ENCODE measurements at regions of chr17 and their contacts with region 1.

Region 1: DNA sequence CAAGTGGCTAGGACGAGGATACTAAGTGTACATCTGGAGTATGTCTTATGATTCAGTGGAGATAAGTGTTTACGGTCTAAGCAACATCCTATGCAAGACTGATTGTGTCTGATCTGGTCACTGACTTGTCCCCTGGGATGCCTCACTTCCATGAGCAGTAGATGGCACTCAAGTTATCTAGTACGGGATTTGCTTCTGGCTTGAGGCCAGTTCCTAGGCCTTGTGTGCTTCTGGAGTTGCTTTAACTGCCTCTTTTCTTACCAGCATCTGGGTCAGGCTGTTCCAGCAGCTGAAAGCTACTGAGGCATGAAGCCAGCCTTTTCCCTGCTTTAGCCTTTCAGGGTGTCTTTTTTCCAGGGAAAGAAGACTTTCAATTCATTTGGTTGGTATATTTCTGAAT is 23.0 kb downstream of the SUPT6H start:
- DNase-seq: no peak
- H3K4me3 ChIP-seq: no peak overlapping the region
- H3K27ac ChIP-seq: no peak overlapping the region
- H3K4me1 ChIP-seq: no peaks in the 10 kb centered on the region
- H3K27me3 ChIP-seq: no peaks in the 10 kb centered on the region
- CTCF ChIP-seq: no peak
- EP300 ChIP-seq: no peak
- POLR2A ChIP-seq: no peak
- RAD21 ChIP-seq: no peak

Region 2: DNA sequence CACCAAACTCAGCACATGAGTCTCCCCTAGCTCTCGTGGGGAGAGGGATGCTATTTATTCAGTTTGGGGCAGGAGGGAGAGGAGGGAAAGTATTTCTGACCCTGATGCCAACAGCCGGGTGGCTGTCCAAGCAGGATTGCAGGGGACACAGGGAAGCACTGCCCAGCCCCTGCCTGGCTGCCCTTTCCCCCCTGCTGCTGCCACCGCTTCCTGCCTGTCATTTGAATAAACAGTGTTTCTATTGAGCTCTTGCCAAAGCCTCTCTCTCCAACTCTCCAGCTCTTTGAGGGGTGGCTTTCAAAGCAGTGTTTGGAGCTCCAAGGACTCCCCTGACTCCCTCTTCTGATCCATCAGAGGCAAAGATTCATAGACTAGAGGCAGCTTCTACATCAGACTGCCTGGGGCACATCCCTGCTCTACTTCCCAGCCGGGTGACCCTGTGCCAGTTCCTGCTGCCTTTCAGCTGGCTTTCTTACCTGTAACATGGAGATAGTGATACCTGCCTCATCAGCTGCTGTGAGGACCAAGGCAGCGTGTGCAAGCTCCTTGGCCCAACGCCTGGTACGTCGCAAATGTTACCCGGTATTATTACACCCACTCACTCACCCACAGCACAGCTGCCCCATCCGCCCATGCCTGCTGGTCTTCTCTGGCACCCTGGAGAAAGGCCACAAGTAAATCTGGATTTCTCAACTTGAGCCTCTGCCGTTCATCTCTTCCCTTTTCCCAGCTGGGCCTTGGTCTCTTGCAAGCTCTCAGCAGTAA is 17.2 kb after region 1 on chr17:
- CTCF ChIA-PET with region 1: interaction called, 4 read pairs
- POLR2A ChIA-PET with region 1: interaction called, 47 read pairs
- DNase-seq: no peak
- H3K4me3 ChIP-seq: no peak overlapping the region
- H3K27ac ChIP-seq: 0 out of 2 replicates have a peak overlapping the region, but pooled peaks have one; percentile 19
- H3K4me1 ChIP-seq: peaks cover 0 to 11% (median 4%) of the 10 kb centered on the region in 4 experiments; a peak in 4 of 7 replicates
- H3K27me3 ChIP-seq: no peaks in the 10 kb centered on the region
- CTCF ChIP-seq: no peak
- EP300 ChIP-seq: no peak
- POLR2A ChIP-seq: peak in 1 of 2 experiments; percentile 45; a peak in 1 of 3 replicates
- RAD21 ChIP-seq: no peak

Region 3: GRCh38 chr17:28726226-28727130 is 41.5 kb after region 1 on chr17 and contains the start of gene TLCD1:
- CTCF ChIA-PET with region 1: no interaction called
- POLR2A ChIA-PET with region 1: no interaction called
- DNase-seq: peak; percentile 93 to 98
- H3K4me3 ChIP-seq: peak within 1 kb of the TSS; percentile 81 to 97 (median 89)
- H3K27ac ChIP-seq: peak within 1 kb of the TSS; percentile 89
- H3K4me1 ChIP-seq: peaks cover 0 to 12% (median 5%) of the 10 kb centered on the region in 4 experiments; a peak in 6 of 7 replicates
- H3K27me3 ChIP-seq: no peaks in the 10 kb centered on the region
- CTCF ChIP-seq: peak; percentile 98 to 99 (median 99)
- EP300 ChIP-seq: peak in 1 of 2 experiments; percentile 70; a peak in 1 of 3 replicates
- POLR2A ChIP-seq: no peak; a peak in 2 of 3 replicates
- RAD21 ChIP-seq: peak; percentile 98 to 99
- total RNA-seq, gene TLCD1: 40.7 and 45.3 TPM in 2 replicates